Colonic mucosa (tissue), 4 donors: ENCODE measurements at regions of chr1 and their contacts with region 1.

Region 1: GRCh38 chr1:147599362-147600118 is 58.2 kb downstream of the BCL9 start:
- DNase-seq: peak; percentile 97
- H3K4me3 ChIP-seq: peak overlapping the region; percentile 54
- H3K27ac ChIP-seq: peak overlapping the region; percentile 72
- H3K4me1 ChIP-seq: peaks cover 6% of the 10 kb centered on the region
- H3K27me3 ChIP-seq: no peaks in the 10 kb centered on the region
- CTCF ChIP-seq: no peak

Region 2: GRCh38 chr1:145927063-145927886 is 1672.3 kb before region 1 on chr1 and contains the start of gene RBM8A:
- intact Hi-C with region 1: no loop called
- DNase-seq: peak; percentile 96
- H3K4me3 ChIP-seq: peak within 1 kb of the TSS; percentile 75
- H3K27ac ChIP-seq: peak within 1 kb of the TSS; percentile 89
- H3K4me1 ChIP-seq: peaks cover 8% of the 10 kb centered on the region
- H3K27me3 ChIP-seq: no peaks in the 10 kb centered on the region
- CTCF ChIP-seq: peak; percentile 65
- total RNA-seq, gene RBM8A: 108 to 148 TPM

Region 3: GRCh38 chr1:147541672-147542568 is 57.6 kb before region 1 on chr1:
- intact Hi-C with region 1: loop called (anchors 2 kb)
- DNase-seq: peak; percentile 56
- H3K4me3 ChIP-seq: peak overlapping the region; percentile 56
- H3K27ac ChIP-seq: peak overlapping the region; percentile 84
- H3K4me1 ChIP-seq: no peaks in the 10 kb centered on the region
- H3K27me3 ChIP-seq: no peaks in the 10 kb centered on the region
- CTCF ChIP-seq: no peak